ENCODE measurements at regions of chr20 and their contacts with region 1.

Region 1: DNA sequence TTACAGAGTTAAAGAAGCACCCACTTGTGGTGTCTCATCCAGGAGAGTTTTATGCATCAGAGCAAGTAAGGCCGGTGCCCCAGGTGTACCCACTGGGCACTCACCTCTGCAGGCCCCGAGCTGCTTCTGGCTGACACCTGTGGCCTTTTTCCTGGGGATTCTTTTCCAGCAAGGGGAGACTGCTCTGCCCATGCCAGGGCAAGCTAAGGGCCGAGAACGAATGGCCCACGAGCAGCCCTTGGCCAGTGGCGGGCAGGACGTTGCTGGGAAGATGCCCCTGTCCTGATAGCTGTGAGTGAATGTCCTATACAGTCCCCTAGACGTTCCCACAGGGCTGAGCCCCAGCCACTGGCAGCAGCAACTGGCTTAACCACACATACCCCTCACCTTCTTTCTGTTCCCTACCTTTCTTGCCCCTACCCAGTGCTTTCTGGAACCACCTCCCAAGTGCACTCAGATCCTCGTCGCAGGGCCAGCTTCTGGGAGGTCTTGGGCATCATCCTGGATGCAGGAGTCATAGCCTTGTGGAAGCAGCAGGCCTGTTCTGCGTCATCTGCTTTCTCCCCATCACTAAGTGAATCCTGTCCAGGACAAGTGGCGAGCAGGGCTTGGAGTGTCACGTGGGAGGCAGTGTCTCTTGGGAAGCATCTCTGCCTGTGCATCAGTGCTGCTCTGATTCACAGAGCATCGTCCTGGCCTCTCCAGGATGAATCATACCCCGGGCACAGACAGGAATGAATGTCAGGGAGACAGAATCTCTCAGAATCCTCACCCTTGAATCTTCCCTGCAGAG is 32.5 kb downstream of the SYNDIG1 start:
- DNase-seq: peak; percentile 64 to 95 (median 87)
- H3K4me3 ChIP-seq: peak overlapping the region in 3 of 59 donors; percentile 4 to 21 (median 11)
- H3K27ac ChIP-seq: peak overlapping the region; percentile 23 to 94 (median 85)
- H3K27me3 ChIP-seq: no peaks in the 10 kb centered on the region
- CTCF ChIP-seq: peak in 1 of 56 donors; percentile 16

Region 2: DNA sequence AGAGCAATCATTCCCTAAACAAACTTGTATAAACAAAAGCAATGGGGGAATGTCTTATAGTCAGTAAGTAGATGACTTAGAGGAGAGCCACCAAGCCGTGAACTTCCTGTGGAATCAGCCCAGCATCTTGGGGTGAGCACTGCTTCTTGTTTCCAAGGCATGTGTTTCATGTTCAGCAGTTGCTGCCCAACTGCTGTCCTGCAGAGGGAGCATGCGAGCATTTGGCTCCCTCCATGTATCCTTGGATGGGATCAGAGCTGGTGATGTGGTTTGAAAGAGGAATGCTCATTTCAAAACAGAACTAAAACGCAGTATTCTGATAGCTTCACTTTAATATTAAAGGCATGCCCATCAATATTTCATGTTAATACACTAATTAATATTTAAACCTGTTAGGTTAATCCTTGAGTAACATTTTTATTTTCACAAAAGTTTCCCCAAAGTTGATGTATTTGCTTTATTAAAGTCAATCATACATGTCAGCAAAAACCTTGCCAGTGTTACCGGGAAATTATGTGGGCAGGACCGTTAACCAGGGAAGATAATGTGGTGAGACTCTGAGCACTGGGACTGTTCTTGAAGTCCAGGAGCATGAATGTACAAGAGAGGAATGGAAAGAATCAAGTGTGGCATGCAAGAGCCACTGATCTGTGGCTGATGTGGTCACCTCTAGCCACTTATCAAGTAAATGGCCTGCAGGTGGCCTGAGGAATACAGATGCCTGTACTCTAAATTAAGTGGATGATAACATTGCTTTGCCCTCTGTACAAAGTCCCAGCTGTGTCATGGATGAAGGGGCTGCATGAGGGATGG is 341.2 kb before region 1 on chr20:
- intact Hi-C with region 1: loop called in 1 of 2 experiments (anchors 10 kb)
- DNase-seq: peak in 9 of 10 donors; percentile 22 to 74 (median 63)
- H3K4me3 ChIP-seq: peak overlapping the region in 1 of 59 donors; percentile 12
- H3K27ac ChIP-seq: no peak overlapping the region
- H3K27me3 ChIP-seq: no peaks in the 10 kb centered on the region
- CTCF ChIP-seq: peak; percentile 35 to 86 (median 78)

Region 3: DNA sequence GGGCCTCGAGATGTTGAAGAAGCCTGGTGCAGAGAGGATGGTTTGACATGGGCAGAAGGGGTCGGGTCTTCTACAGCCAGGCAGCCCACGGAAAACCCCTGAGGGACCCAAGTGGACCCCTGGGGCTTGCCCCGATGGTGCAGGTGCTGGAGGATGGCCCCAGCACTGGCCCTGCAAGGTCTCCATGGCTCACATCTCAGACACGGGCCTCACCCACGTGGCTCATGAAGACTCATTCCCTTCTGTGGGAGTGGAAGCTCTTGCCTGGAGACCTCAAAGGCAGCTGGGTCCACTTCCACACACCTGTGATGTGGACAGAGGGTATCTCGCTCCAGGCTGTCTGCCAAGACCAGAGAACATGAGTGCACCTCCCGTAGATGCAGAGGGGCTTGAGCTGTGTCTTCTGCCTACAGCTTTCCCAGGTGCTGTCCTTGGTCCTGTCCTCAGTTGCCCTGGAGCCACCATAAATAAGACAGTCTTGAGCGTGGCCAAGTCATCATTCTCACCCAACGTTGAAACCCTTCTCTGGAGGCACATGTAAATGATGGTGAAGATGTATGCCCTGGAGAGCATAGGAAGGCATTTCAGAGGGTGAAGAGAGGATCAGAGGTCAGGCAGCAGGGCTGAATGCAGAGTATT is 75.4 kb after region 1 on chr20:
- intact Hi-C with region 1: loop called (anchors 5 to 10 kb)
- DNase-seq: no peak
- H3K4me3 ChIP-seq: no peak overlapping the region
- H3K27ac ChIP-seq: no peak overlapping the region
- H3K27me3 ChIP-seq: no peaks in the 10 kb centered on the region
- CTCF ChIP-seq: no peak

Region 4: DNA sequence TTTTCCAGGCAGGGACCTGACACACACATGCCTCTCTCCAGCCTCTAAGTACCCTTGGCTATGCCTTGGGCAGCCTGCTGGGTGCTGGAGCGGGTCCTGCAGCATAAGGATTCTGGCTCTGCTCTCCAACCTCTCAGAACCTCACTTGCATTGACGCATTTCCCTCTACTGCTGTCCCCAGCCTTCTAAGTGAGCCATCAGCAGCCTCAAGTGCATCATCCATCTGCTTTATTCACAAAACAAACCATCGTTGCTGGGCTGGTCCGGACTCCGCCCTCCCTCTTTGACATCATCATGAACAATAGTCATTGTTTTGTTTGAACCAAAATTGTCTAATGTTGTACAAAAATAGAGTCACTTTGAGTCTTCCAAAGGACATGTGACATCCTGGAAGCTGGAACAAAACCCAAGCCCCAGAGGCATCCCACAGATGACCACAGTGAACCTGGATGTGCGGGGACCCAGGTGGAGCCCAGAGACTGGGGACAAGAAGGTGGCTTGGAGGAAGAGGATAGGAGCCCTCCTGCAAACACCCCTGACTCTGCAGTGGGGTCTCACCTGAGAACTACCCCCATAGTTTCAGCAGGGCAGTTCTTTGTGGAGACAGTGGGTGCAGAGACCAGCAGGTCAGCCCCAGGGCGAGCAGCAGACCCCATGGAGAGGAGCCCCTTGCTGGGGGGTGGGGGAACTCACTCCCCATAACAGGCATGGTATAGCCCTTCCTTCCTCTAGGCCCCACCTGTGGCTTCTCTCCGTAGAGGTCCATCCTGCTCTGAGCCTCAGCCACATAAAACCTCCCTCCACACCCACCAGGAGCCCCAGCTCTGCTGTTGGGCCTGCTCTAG is 197.6 kb after region 1 on chr20:
- intact Hi-C with region 1: loop called in 1 of 2 experiments (anchors 10 kb)
- DNase-seq: peak in 5 of 10 donors; percentile 38 to 72 (median 57)
- H3K4me3 ChIP-seq: peak overlapping the region in 1 of 59 donors; percentile 8
- H3K27ac ChIP-seq: peak overlapping the region in 45 of 59 donors; percentile 3 to 87 (median 64)
- H3K27me3 ChIP-seq: no peaks in the 10 kb centered on the region
- CTCF ChIP-seq: peak in 1 of 56 donors; percentile 6

Measured in dorsolateral prefrontal cortex (tissue), 120 donors.